CD8-positive, alpha-beta T cell (primary cell): ENCODE measurements at regions of chr20 and their contacts with region 1.

Region 1: GRCh38 chr20:40970201-40970600 is 58.4 kb upstream of the TOP1 start:
- DNase-seq: peak in 1 of 9 experiments; percentile 44
- ATAC-seq: no peak
- H3K4me3 ChIP-seq: no peak overlapping the region
- H3K4me3 Mint-ChIP-seq: no peak overlapping the region
- H3K27ac ChIP-seq: no peak overlapping the region
- H3K27ac Mint-ChIP-seq: no peak overlapping the region
- H3K4me1 ChIP-seq: no peaks in the 10 kb centered on the region
- H3K4me1 Mint-ChIP-seq: peaks cover 7% of the 10 kb centered on the region
- H3K27me3 ChIP-seq: no peaks in the 10 kb centered on the region
- H3K27me3 Mint-ChIP-seq: peaks cover 3% of the 10 kb centered on the region
- CTCF ChIP-seq: no peak

Region 2: DNA sequence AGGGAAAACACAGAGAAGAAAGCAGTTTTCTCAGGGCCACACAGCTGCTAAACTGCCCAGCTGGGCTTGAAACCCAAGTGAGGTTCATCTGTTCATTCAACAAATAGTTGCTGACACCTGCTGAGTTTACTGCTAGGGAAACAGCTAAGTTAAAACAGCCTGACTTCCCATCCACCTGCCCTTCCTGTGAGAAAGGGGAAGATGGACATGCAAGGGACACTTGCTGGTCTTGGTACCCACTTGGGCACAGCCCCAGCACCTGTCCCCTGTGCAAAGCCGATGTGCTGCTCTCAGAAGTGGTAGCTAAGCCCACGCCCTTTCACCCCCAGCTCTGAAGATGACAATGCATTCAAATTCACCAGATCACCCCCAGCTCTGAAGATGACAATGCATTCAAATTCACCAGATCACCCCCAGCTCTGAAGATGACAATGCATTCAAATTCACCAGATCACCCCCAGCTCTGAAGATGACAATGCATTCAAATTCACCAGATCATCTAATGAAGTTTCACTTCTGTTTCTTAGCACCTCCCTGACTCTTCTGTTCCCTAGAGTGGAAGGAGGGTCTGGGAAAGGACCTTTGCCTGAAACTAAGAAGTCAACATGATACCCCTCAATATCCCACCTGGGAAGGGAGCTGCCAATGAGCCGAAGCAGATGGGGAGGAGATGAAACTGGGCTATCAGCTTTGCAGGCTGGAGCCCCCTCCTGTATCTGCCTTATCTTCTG is 12.4 kb after region 1 on chr20:
- CTCF ChIA-PET with region 1: interaction called, 12 read pairs
- POLR2A ChIA-PET with region 1: interaction called, 3 read pairs
- intact Hi-C with region 1: no loop called
- DNase-seq: no peak
- ATAC-seq: no peak
- H3K4me3 ChIP-seq: no peak overlapping the region
- H3K4me3 Mint-ChIP-seq: no peak overlapping the region
- H3K27ac ChIP-seq: no peak overlapping the region
- H3K27ac Mint-ChIP-seq: no peak overlapping the region
- H3K4me1 ChIP-seq: peaks cover 12% of the 10 kb centered on the region
- H3K4me1 Mint-ChIP-seq: peaks cover 12% of the 10 kb centered on the region
- H3K27me3 ChIP-seq: no peaks in the 10 kb centered on the region
- H3K27me3 Mint-ChIP-seq: peaks cover 5% of the 10 kb centered on the region
- CTCF ChIP-seq: no peak

Region 3: DNA sequence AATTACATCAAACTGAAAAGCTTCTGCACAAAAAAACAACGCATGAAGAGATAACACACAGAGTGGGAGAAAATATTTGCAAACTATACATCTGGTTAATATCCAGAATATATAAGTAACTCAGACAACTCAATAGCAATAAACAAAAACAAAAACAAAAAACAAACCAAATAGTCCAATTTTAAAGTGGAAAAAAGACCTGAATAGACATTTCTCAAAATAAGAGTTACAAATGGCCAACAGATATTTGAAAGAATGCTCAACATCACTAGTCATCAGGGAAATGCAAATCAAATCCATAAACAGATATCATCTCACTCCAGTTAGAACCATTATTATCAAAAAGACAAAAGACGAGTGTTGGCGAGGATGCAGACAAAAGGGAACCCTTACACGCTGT is 29.6 kb after region 1 on chr20:
- CTCF ChIA-PET with region 1: no interaction called
- POLR2A ChIA-PET with region 1: no interaction called
- intact Hi-C with region 1: no loop called
- DNase-seq: no peak
- ATAC-seq: no peak
- H3K4me3 ChIP-seq: no peak overlapping the region
- H3K4me3 Mint-ChIP-seq: no peak overlapping the region
- H3K27ac ChIP-seq: no peak overlapping the region
- H3K27ac Mint-ChIP-seq: no peak overlapping the region
- H3K4me1 ChIP-seq: peaks cover 6% of the 10 kb centered on the region
- H3K4me1 Mint-ChIP-seq: peaks cover 13% of the 10 kb centered on the region
- H3K27me3 ChIP-seq: no peaks in the 10 kb centered on the region
- H3K27me3 Mint-ChIP-seq: no peaks in the 10 kb centered on the region
- CTCF ChIP-seq: no peak

Region 4: GRCh38 chr20:41078329-41078728 is 108.1 kb after region 1 on chr20:
- CTCF ChIA-PET with region 1: interaction called, 9 read pairs
- POLR2A ChIA-PET with region 1: interaction called, 3 read pairs
- intact Hi-C with region 1: loop called (anchors 1 kb)
- DNase-seq: peak in 2 of 9 experiments; percentile 30 to 52
- ATAC-seq: peak; percentile 46
- H3K4me3 ChIP-seq: no peak overlapping the region
- H3K4me3 Mint-ChIP-seq: peak overlapping the region; percentile 43
- H3K27ac ChIP-seq: no peak overlapping the region
- H3K27ac Mint-ChIP-seq: peak overlapping the region; percentile 71
- H3K4me1 ChIP-seq: peaks cover 28% of the 10 kb centered on the region
- H3K4me1 Mint-ChIP-seq: peaks cover 65% of the 10 kb centered on the region
- H3K27me3 ChIP-seq: no peaks in the 10 kb centered on the region
- H3K27me3 Mint-ChIP-seq: no peaks in the 10 kb centered on the region
- CTCF ChIP-seq: no peak